ENCODE measurements at regions of chr14 and their contacts with region 1.

Region 1: DNA sequence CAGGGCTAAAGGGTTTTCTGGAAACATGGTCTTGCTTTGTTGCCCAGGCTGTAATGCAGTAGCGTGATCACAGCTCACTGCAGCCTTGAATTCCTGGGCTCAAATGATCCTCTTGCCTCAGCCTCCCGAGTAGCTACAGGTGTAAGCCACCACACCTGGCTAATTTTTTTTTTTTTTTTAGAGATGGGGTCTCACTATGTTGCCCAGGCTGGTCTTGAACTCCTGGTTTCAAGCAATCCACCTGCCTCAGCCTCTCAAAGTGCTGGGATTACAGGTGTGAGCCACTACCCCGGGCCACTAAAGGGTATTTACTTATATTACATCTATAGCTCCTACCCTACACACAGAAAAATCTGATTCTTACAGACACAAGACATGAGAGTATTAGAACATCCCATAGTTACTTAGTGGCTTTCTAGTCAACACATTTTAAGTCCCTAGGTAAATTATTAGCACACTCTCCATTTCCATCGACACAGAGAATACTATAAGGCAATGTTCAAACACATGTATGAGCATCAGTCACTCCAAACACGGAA is 6.2 kb upstream of the DCAF11 start:
- DNase-seq: no peak
- H3K4me3 Mint-ChIP-seq: peak overlapping the region; percentile 24
- H3K27ac Mint-ChIP-seq: peak overlapping the region; percentile 95
- H3K4me1 Mint-ChIP-seq: peaks cover 34% of the 10 kb centered on the region
- H3K27me3 Mint-ChIP-seq: no peaks in the 10 kb centered on the region

Region 2: DNA sequence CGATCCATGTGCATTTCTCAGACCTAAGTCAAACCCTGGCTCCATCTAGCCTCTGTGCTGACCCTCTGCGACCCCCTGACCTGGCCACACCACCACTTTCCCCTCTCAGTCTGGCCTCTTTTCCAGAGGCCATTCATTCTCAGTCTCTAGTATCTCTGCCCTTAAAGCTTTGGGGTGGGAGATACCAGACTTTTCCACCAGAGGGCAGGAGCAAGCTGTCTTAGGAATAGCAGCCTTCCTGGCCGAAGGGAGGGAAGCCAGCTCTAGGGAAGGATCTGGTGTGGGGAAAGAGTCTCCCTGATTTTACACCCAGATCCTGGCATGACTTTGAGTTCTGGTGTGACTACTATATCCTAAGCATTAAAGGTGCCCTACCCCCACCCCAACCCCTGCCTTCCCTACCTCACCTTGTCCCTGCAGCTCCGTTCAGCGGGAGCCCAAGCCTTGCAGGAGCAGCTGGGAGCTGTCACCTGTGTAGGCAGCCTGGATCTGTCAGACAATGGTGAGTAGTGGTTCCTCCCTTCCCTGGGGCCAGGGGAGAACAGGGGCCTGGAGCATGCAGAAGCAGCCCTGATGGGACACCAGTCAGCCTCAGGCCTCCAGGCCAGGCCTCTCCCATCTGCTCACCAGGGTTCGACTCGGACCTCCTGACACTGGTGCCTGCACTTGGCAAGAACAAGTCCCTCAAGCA is 50.0 kb before region 1 on chr14:
- intact Hi-C with region 1: loop called (anchors 1 kb)
- DNase-seq: peak; percentile 24
- H3K4me3 Mint-ChIP-seq: no peak overlapping the region
- H3K27ac Mint-ChIP-seq: peak overlapping the region; percentile 65
- H3K4me1 Mint-ChIP-seq: peaks cover 13% of the 10 kb centered on the region
- H3K27me3 Mint-ChIP-seq: peaks cover 3% of the 10 kb centered on the region

Region 3: DNA sequence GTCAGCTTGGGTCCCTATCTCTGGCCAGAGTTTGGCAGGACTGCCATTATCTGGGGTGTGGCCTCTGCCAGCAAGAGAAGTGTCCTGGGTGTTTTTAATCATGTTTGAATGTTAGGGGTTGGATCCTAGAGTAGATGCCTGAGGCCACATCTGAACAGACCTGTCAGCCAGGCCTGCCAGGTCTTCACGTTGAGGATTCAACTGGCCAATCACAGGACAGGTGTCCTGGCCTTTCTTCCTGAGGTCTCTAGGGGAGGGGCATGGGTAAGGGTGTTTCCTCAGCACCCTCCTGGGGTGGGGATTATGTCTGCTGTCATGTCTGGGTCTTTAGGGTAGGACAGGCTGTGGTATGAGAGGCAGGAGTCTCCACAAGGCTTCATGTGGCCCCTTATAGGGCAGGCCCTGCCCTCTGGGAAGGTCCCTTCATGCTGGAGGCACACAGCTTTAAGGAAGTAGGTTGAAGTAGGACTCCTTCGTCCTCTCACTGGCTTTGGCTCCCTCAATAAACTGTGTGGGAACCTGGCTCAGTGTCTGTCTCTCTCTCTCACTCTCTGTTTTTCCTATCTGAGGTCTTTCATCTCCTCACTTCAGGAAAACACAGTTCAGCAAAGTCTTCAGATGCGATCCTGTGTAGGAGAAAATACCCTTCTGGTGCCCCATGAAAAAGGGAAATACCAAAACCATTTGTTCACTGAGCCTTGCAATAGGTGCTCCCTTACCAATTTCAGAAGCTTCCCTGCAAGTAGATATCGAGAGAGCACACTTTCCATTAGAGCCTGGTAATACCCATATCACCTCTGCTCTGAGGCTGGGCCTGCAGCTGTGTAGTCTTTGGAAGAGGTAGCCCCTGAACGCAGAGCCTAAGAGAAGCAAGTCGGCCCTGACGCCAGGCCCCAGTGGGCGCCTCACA is 15.4 kb after region 1 on chr14:
- intact Hi-C with region 1: no loop called
- DNase-seq: no peak
- H3K4me3 Mint-ChIP-seq: no peak overlapping the region
- H3K27ac Mint-ChIP-seq: no peak overlapping the region
- H3K4me1 Mint-ChIP-seq: no peaks in the 10 kb centered on the region
- H3K27me3 Mint-ChIP-seq: no peaks in the 10 kb centered on the region

Measured in activated T-helper 1 cell treated with anti-CD3 and anti-CD28 coated beads, Interleukin-12 subunit alpha, Interleukin-12 subunit beta, Interleukin-2, Interleukin-4 antibody, amounts not matched to agents 30 ng/mL and 10 ng/mL and 1 ng/mL, durations not matched to agents 14 hours and 24 hours and 36 hours (primary cell).